Cardiac septum (tissue), 1 donor: ENCODE measurements at regions of chr15 and their contacts with region 1.

Region 1: GRCh38 chr15:101451266-101451799 is 38.2 kb downstream of the PCSK6 start:
- DNase-seq: peak; percentile 76

Region 2: DNA sequence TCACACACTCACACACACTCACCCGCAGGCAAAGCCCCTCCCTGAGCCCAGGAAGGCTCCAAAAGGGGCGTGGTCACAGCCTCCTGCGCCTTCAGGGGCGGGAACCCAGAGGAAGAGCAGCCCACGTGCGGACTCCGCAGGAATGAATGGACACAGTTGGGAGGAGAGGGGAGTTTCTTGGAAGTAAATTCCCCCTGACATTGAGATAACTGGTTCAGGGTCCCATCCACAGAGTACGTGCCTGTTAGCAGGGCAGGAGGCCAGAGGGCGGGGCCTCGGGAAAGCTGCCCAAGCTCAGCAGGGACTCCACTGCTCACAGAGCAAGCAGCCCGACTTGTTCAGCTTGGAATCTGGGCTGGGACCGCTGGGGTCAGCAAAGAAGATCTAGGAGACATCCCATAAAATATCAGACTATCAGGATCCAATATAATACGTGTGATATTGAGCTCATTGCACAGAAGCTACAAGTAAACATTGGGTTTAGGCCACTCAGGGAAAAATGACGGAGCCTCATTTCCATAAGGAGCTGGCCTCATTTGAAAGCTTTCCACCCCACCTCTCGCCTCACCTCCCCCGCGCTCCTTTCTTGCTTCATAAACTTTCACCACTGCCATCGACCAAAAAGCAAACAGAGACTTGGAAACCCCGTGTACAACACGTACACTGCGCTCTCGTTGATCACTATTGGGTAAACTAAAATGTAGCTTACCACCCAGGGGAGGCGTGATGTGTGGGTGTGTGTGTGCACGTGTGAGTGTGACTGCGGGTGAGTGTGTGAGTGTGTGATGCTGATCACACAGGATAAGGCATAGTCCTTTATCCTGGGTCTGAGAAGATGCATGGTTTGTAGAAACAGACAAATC is 164.9 kb after region 1 on chr15:
- intact Hi-C with region 1: loop called (anchors 5 kb)
- DNase-seq: peak; percentile 77